ENCODE measurements at regions of chr12 and their contacts with region 1.

Region 1: DNA sequence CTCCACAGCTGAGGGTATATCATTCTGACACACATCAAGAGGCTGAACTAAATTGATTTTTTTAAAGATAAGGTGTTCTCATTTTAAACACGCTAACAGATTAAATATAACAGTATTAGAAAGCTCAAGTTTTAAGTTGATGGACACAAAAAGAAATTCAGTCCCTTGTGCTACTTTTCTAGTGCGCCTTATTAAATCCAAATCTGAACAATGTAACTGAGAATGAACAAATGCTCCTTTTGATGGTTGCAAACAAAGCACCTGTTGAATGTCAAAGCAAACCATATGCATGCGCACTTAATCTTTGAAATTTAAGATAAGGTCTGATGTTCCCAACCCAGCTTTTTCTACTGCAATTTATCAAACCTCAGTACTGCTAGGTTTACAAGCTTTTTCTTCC is 401.9 kb downstream of the PAWR start:
- DNase-seq: no peak
- H3K4me3 Mint-ChIP-seq: no peak overlapping the region
- H3K27ac Mint-ChIP-seq: no peak overlapping the region
- H3K4me1 Mint-ChIP-seq: no peaks in the 10 kb centered on the region
- H3K27me3 Mint-ChIP-seq: no peaks in the 10 kb centered on the region

Region 2: DNA sequence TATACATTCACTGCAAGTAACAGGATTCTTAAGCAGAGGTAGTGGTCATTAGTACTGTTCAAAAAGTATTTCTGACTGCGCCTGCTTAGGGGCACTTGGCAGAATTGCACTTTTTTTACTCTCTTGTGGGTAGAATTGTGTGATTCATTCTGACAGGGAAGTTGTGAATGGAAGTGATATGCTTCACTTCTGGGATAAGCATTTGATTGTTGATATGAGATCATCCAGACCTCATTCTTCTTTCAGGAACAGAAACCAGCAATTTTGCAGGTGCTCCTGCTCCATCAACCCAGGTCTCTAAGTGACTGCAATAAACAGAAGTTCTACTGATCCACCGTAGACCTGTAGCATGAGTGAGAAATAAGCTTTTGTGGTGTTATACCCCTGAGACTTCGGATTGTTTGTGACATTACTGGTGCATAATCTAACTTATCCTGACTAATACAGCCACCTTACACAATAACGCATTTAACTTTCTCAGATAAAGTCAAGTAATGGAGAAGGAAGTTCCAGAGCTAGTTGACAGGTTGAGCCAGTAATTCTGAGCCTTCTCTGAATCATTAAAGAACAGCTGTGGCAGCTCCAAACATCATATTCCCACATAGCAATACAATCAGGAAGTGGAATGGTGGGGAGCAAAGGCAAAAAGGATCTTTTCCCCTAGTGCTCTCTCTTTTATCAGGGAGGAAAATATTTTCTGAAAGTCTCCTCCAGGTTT is 36.4 kb before region 1 on chr12:
- intact Hi-C with region 1: loop called (anchors 1 kb)
- DNase-seq: no peak
- H3K4me3 Mint-ChIP-seq: no peak overlapping the region
- H3K27ac Mint-ChIP-seq: no peak overlapping the region
- H3K4me1 Mint-ChIP-seq: no peaks in the 10 kb centered on the region
- H3K27me3 Mint-ChIP-seq: no peaks in the 10 kb centered on the region

Measured in activated T-helper 1 cell treated with anti-CD3 and anti-CD28 coated beads, Interleukin-12 subunit alpha, Interleukin-12 subunit beta, Interleukin-2, Interleukin-4 antibody, amounts not matched to agents 30 ng/mL and 10 ng/mL and 1 ng/mL, durations not matched to agents 14 hours and 24 hours and 36 hours (primary cell).